Dendritic cell treated with granulocyte-macrophage colony-stimulating factor and Interleukin-4, amounts not matched to agents 40 ng/mL and 50 ng/mL, for 4 days (primary cell): ENCODE measurements at regions of chr2 and their contacts with region 1.

Region 1: DNA sequence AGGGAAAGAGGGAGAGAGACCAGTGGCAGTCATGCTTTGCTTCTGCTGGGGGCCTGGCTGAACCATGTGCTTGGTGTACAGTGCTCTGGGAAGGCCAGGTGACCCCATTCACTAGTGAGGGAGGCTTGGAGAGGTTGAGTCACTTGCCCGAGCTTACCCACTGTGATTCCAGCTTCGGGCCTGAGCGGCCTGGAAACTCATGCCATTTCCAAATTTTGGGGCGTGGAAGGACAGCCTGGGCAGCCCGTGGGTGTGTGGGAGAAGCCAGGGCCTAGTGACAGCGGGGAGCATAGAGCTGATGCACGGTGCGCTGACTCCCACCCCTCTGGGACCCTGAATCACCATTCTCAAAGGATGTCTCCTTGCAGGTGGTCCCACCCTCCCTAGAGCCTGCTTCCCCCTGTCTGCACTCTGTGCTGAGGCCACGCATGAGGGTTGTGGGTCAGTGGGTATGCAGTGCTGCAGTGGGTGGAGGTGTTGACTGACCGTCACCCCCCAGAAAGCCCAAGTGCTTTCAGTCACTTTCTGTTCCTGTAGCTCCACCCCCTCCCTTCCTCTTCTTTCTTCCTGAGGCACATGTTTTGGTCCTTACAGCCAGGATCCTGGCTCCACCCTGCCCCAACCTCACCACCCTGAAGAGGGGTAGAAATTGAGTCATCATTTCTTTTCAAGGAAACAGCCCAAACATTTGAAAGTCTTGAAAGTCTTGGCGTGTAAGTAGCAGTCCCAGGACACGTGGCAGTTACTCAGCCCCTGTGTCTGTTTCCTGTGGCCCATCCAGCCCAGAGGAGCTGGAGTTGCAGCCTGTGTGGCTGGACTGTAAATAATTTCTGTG is 69.3 kb upstream of the MCFD2 start:
- H3K4me3 Mint-ChIP-seq: peak overlapping the region; percentile 65
- H3K27ac Mint-ChIP-seq: peak overlapping the region; percentile 95
- H3K4me1 Mint-ChIP-seq: peaks cover 99% of the 10 kb centered on the region
- H3K27me3 Mint-ChIP-seq: no peaks in the 10 kb centered on the region

Region 2: GRCh38 chr2:46967990-46968647 is 16.7 kb before region 1 on chr2:
- intact Hi-C with region 1: loop called (anchors 2 kb)
- H3K4me3 Mint-ChIP-seq: peak overlapping the region; percentile 66
- H3K27ac Mint-ChIP-seq: peak overlapping the region; percentile 95
- H3K4me1 Mint-ChIP-seq: peaks cover 95% of the 10 kb centered on the region
- H3K27me3 Mint-ChIP-seq: no peaks in the 10 kb centered on the region

Region 3: DNA sequence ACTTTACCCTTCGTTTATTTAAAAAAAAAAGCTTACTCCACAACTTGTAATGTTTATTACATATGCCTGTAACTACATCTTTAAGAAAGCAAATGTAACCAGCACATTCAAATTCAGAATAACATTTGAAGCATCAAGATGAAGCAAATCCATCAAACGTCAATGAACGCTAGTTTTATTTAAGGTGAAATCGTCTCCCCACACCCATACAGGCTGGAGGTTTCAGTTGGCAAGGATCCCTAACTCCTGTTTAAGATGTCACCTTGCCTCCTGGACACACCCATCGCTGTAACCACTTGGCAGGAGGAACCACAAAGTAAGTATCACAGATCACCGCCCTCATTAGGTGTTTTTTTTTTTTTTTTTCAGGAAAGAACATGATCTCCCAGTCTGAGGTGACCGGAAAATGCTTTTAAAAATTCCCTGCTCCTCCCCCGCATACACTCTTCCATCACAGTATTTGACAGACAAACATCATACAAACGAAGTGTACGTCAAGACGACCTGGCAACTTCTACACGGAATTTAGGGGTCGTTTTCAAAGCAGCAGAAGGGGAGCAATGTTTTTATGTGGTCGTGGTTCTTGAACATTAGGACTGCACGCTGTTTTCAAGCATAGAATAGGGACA is 190.0 kb after region 1 on chr2:
- intact Hi-C with region 1: no loop called
- H3K4me3 Mint-ChIP-seq: peak overlapping the region; percentile 87
- H3K27ac Mint-ChIP-seq: peak overlapping the region; percentile 99
- H3K4me1 Mint-ChIP-seq: peaks cover 47% of the 10 kb centered on the region
- H3K27me3 Mint-ChIP-seq: no peaks in the 10 kb centered on the region

Region 4: GRCh38 chr2:48799601-48800000 is 1814.7 kb after region 1 on chr2:
- intact Hi-C with region 1: no loop called
- H3K4me3 Mint-ChIP-seq: no peak overlapping the region
- H3K27ac Mint-ChIP-seq: no peak overlapping the region
- H3K4me1 Mint-ChIP-seq: no peaks in the 10 kb centered on the region
- H3K27me3 Mint-ChIP-seq: no peaks in the 10 kb centered on the region